ENCODE measurements at regions of chr18 and their contacts with region 1.

Region 1: GRCh38 chr18:63890950-63891304 is 3.4 kb downstream of the SERPINB2 start:
- DNase-seq: peak in 1 of 3 donors; percentile 33
- H3K4me3 ChIP-seq: peak overlapping the region in 1 of 3 experiments; percentile 70
- H3K4me3 Mint-ChIP-seq: peak overlapping the region in 1 of 2 donors; percentile 11
- H3K27ac ChIP-seq: peak overlapping the region; percentile 85 to 91
- H3K27ac Mint-ChIP-seq: peak overlapping the region; percentile 80 to 98 (median 96)
- H3K4me1 ChIP-seq: peaks cover 81 to 95% of the 10 kb centered on the region in 2 donors
- H3K4me1 Mint-ChIP-seq: peaks cover 84% of the 10 kb centered on the region
- H3K27me3 ChIP-seq: no peaks in the 10 kb centered on the region
- H3K27me3 Mint-ChIP-seq: no peaks in the 10 kb centered on the region
- CTCF ChIP-seq: peak; percentile 51

Region 2: DNA sequence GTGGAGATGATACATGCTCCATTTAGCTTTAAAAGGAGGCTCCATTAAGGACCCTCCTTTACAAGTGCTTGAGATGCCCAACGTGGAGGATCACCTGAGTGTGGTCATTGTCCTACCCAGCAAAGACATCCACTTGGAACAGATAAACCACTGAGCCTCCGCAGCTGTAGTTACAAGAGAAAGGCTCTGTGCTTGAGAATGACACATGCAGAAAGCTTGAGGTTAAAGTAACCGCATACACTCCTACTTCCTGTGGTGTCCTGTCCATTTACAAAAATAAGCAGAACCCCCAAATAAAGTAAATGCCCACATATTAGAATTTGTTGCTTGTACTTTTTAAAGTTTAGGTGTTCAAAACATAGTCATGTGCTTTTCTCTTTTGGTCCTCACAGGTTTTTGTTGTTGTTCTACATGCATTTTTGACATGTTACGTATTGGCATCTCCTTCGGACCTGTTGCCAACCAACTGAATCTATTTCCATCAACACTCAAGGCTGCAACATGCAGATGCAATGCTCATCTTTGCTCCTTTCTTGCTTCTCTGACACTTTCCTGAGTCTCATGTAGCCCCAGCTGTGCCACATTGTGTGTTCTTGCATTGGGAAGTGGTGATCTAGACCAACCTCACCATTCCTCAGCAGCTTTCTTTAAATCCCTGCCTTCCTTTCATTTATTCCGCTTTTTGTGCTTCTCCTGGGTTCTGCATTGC is 59.7 kb before region 1 on chr18:
- intact Hi-C with region 1: no loop called
- DNase-seq: peak; percentile 55 to 73 (median 72)
- H3K4me3 ChIP-seq: peak overlapping the region in 2 of 3 experiments; percentile 9 to 58
- H3K4me3 Mint-ChIP-seq: peak overlapping the region; percentile 27 to 66
- H3K27ac ChIP-seq: peak overlapping the region in 1 of 2 donors; percentile 42
- H3K27ac Mint-ChIP-seq: peak overlapping the region in 5 of 7 donors; percentile 26 to 82 (median 77)
- H3K4me1 ChIP-seq: peaks cover 28 to 37% of the 10 kb centered on the region in 2 donors
- H3K4me1 Mint-ChIP-seq: peaks cover 28% of the 10 kb centered on the region
- H3K27me3 ChIP-seq: no peaks in the 10 kb centered on the region
- H3K27me3 Mint-ChIP-seq: no peaks in the 10 kb centered on the region
- CTCF ChIP-seq: no peak

Region 3: GRCh38 chr18:63930773-63931354 is 39.9 kb after region 1 on chr18:
- intact Hi-C with region 1: loop called (anchors 5 kb)
- DNase-seq: peak in 2 of 3 donors; percentile 61 to 67
- H3K4me3 ChIP-seq: no peak overlapping the region
- H3K4me3 Mint-ChIP-seq: no peak overlapping the region
- H3K27ac ChIP-seq: peak overlapping the region in 1 of 2 donors; percentile 66
- H3K27ac Mint-ChIP-seq: peak overlapping the region; percentile 67 to 88 (median 81)
- H3K4me1 ChIP-seq: peaks cover 31 to 38% of the 10 kb centered on the region in 2 donors
- H3K4me1 Mint-ChIP-seq: peaks cover 41% of the 10 kb centered on the region
- H3K27me3 ChIP-seq: no peaks in the 10 kb centered on the region
- H3K27me3 Mint-ChIP-seq: peaks cover 0 to 3% (median 0%) of the 10 kb centered on the region in 3 donors
- CTCF ChIP-seq: no peak

Region 4: DNA sequence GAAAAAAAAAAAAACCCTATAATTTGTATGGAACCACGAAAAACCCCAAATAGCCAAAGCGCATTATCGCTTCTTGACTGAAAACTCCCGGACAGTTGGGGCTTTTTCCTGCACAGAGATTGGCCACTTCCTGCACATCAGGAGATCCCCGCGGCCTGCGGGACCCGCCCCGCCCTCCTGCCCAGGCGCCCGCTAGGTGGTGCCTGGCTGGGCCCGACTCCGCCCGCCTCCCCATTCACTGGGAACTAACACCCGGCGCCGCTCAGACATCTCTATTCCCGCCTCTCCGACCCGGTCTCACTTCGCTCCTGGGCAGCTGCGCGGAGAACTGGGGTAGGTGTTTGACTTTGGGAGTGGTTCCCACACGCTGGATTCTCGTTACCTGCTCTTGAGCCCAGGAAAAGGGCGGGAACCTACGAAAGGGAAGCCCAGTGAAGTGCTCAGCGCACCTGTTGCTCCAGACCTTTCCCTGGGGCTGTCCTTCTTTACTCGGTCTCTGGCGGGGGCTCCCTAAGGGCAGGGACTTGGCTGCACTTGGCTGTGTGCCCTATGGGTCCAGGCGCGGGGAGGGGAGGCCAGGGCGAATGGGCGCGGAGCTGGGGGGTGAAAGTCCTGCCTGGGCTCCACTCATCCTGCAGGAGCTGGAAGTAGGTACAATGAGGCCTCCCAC is 58.3 kb after region 1 on chr18 and contains the start of gene HMSD:
- intact Hi-C with region 1: no loop called
- DNase-seq: peak in 2 of 3 donors; percentile 60 to 86
- H3K4me3 ChIP-seq: peak within 1 kb of the TSS in 1 of 3 experiments; percentile 51
- H3K4me3 Mint-ChIP-seq: peak within 1 kb of the TSS; percentile 66 to 83
- H3K27ac ChIP-seq: no peak within 1 kb of the TSS
- H3K27ac Mint-ChIP-seq: no peak within 1 kb of the TSS
- H3K4me1 ChIP-seq: peaks cover 9 to 10% of the 10 kb centered on the region in 2 donors
- H3K4me1 Mint-ChIP-seq: peaks cover 18% of the 10 kb centered on the region
- H3K27me3 ChIP-seq: no peaks in the 10 kb centered on the region
- H3K27me3 Mint-ChIP-seq: peaks cover 0 to 4% (median 2%) of the 10 kb centered on the region in 3 donors
- CTCF ChIP-seq: peak; percentile 57
- polyA plus RNA-seq, gene HMSD: not detected

Region 5: GRCh38 chr18:63979409-63979920 is 88.5 kb after region 1 on chr18:
- intact Hi-C with region 1: loop called in 1 of 2 experiments (anchors 5 kb)
- DNase-seq: peak; percentile 35 to 76 (median 68)
- H3K4me3 ChIP-seq: no peak overlapping the region
- H3K4me3 Mint-ChIP-seq: peak overlapping the region in 1 of 2 donors; percentile 67
- H3K27ac ChIP-seq: peak overlapping the region in 1 of 2 donors; percentile 71
- H3K27ac Mint-ChIP-seq: peak overlapping the region; percentile 70 to 93 (median 82)
- H3K4me1 ChIP-seq: peaks cover 76 to 82% of the 10 kb centered on the region in 2 donors
- H3K4me1 Mint-ChIP-seq: peaks cover 78% of the 10 kb centered on the region
- H3K27me3 ChIP-seq: no peaks in the 10 kb centered on the region
- H3K27me3 Mint-ChIP-seq: peaks cover 0 to 2% (median 0%) of the 10 kb centered on the region in 3 donors
- CTCF ChIP-seq: peak; percentile 89